ENCODE measurements at regions of chr6 and their contacts with region 1.

Region 1: DNA sequence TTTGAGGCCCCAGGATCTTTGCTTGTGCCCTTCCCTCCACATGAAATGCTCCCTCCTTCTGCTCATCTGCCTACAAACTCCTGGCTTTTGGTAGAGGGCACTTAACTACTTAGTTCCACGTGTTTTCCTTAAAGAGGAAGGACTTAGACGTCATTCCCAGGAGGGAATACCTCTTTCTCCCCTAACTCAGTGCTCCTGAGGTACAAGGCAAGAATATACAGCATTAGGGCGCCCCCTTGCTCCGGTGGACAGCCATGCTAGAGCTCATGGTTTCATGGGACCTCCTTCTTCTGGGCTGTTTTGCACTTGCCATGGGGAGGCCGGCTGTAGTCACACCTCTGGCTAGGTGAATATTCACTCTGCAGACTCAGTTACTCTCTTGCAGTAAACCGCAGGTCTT is 93.8 kb upstream of the LY86 start:
- DNase-seq: peak; percentile 59
- ATAC-seq: peak; percentile 61
- H3K4me3 ChIP-seq: no peak overlapping the region
- H3K4me3 Mint-ChIP-seq: no peak overlapping the region
- H3K27ac ChIP-seq: no peak overlapping the region
- H3K27ac Mint-ChIP-seq: no peak overlapping the region
- H3K4me1 ChIP-seq: no peaks in the 10 kb centered on the region
- H3K4me1 Mint-ChIP-seq: peaks cover 3% of the 10 kb centered on the region
- H3K27me3 ChIP-seq: no peaks in the 10 kb centered on the region
- H3K27me3 Mint-ChIP-seq: peaks cover 3% of the 10 kb centered on the region
- CTCF ChIP-seq: peak; percentile 68

Region 2: DNA sequence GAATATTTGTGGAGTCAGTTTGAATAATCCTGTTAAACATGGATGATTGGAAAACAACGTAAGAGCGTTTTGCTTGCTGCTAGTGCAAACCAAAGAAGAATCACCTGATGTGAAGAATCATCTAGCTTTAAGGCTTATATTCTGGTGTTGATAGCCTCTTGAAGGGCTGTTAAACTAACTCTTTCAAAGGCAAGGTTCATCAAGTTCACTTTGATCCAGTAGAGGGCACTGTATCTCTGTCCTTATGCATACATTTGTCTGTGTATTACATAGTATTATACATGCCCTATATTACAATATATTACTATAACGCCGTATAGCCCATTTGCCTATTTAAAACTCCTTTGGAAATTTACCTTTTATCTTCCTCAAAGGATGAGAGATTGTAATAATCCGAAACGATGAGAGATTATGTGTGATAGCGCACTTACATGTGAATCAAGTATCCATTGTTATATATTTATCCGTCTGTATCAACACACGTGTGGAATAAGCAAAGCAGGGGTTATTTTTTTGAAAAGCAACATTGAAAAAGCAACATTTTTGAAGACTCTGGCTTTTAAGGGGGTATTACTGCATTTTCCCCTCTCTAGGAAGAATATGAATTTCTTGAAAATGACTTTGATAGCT is 437.1 kb before region 1 on chr6:
- CTCF ChIA-PET with region 1: interaction called, 44 read pairs
- POLR2A ChIA-PET with region 1: no interaction called
- intact Hi-C with region 1: loop called (anchors 1 kb)
- DNase-seq: peak; percentile 72
- ATAC-seq: peak; percentile 67
- H3K4me3 ChIP-seq: no peak overlapping the region
- H3K4me3 Mint-ChIP-seq: no peak overlapping the region
- H3K27ac ChIP-seq: no peak overlapping the region
- H3K27ac Mint-ChIP-seq: no peak overlapping the region
- H3K4me1 ChIP-seq: no peaks in the 10 kb centered on the region
- H3K4me1 Mint-ChIP-seq: no peaks in the 10 kb centered on the region
- H3K27me3 ChIP-seq: peaks cover 0 to 18% (median 13%) of the 10 kb centered on the region in 4 experiments
- H3K27me3 Mint-ChIP-seq: peaks cover 65% of the 10 kb centered on the region
- CTCF ChIP-seq: peak; percentile 77

Region 3: GRCh38 chr6:6105472-6106036 is 389.1 kb before region 1 on chr6:
- CTCF ChIA-PET with region 1: interaction called, 6 read pairs
- POLR2A ChIA-PET with region 1: no interaction called
- intact Hi-C with region 1: loop called (anchors 1 kb)
- DNase-seq: peak; percentile 25
- ATAC-seq: no peak
- H3K4me3 ChIP-seq: no peak overlapping the region
- H3K4me3 Mint-ChIP-seq: no peak overlapping the region
- H3K27ac ChIP-seq: no peak overlapping the region
- H3K27ac Mint-ChIP-seq: no peak overlapping the region
- H3K4me1 ChIP-seq: no peaks in the 10 kb centered on the region
- H3K4me1 Mint-ChIP-seq: no peaks in the 10 kb centered on the region
- H3K27me3 ChIP-seq: peaks cover 0 to 7% (median 0%) of the 10 kb centered on the region in 4 experiments
- H3K27me3 Mint-ChIP-seq: peaks cover 44% of the 10 kb centered on the region
- CTCF ChIP-seq: no peak

Region 4: GRCh38 chr6:6221787-6222535 is 272.7 kb before region 1 on chr6:
- CTCF ChIA-PET with region 1: interaction called, 15 read pairs
- POLR2A ChIA-PET with region 1: no interaction called
- intact Hi-C with region 1: loop called (anchors 2 kb)
- DNase-seq: peak; percentile 21
- ATAC-seq: no peak
- H3K4me3 ChIP-seq: no peak overlapping the region
- H3K4me3 Mint-ChIP-seq: no peak overlapping the region
- H3K27ac ChIP-seq: no peak overlapping the region
- H3K27ac Mint-ChIP-seq: no peak overlapping the region
- H3K4me1 ChIP-seq: no peaks in the 10 kb centered on the region
- H3K4me1 Mint-ChIP-seq: no peaks in the 10 kb centered on the region
- H3K27me3 ChIP-seq: peaks cover 0 to 9% (median 3%) of the 10 kb centered on the region in 4 experiments
- H3K27me3 Mint-ChIP-seq: peaks cover 31% of the 10 kb centered on the region
- CTCF ChIP-seq: peak; percentile 13

Region 5: DNA sequence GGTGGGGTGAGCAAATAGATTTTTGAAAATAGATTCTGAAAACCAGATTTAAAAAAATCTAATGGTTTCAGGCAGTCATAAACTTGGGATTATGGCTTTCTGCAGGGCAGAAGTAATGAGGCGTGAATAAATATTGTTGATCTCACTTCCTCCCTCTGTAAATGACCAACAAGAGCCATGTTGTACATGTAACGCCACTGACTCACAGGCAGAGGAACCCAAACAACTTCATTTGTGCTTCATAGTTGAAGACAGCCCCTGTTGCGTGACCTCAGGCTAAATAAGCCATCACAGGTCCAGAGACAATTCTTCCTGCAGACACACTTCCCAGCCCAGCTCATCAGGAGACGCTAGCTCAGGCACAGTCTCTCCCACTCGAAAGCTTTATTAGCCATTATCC is 115.1 kb before region 1 on chr6:
- CTCF ChIA-PET with region 1: interaction called, 31 read pairs
- POLR2A ChIA-PET with region 1: interaction called, 11 read pairs
- intact Hi-C with region 1: loop called (anchors 1 kb)
- DNase-seq: no peak
- ATAC-seq: peak; percentile 41
- H3K4me3 ChIP-seq: no peak overlapping the region
- H3K4me3 Mint-ChIP-seq: no peak overlapping the region
- H3K27ac ChIP-seq: no peak overlapping the region
- H3K27ac Mint-ChIP-seq: peak overlapping the region; percentile 29
- H3K4me1 ChIP-seq: no peaks in the 10 kb centered on the region
- H3K4me1 Mint-ChIP-seq: peaks cover 9% of the 10 kb centered on the region
- H3K27me3 ChIP-seq: no peaks in the 10 kb centered on the region
- H3K27me3 Mint-ChIP-seq: no peaks in the 10 kb centered on the region
- CTCF ChIP-seq: no peak

Region 6: GRCh38 chr6:6390849-6391602 is 103.7 kb before region 1 on chr6:
- CTCF ChIA-PET with region 1: interaction called, 5 read pairs
- POLR2A ChIA-PET with region 1: no interaction called
- intact Hi-C with region 1: loop called (anchors 5 kb)
- DNase-seq: peak; percentile 81
- ATAC-seq: peak; percentile 75
- H3K4me3 ChIP-seq: peak overlapping the region in 3 of 5 experiments; percentile 3 to 36 (median 26)
- H3K4me3 Mint-ChIP-seq: peak overlapping the region; percentile 87
- H3K27ac ChIP-seq: peak overlapping the region; percentile 83 to 92
- H3K27ac Mint-ChIP-seq: peak overlapping the region; percentile 97
- H3K4me1 ChIP-seq: peaks cover 37 to 44% of the 10 kb centered on the region in 2 donors
- H3K4me1 Mint-ChIP-seq: peaks cover 58% of the 10 kb centered on the region
- H3K27me3 ChIP-seq: no peaks in the 10 kb centered on the region
- H3K27me3 Mint-ChIP-seq: peaks cover 3% of the 10 kb centered on the region
- CTCF ChIP-seq: no peak

Region 7: DNA sequence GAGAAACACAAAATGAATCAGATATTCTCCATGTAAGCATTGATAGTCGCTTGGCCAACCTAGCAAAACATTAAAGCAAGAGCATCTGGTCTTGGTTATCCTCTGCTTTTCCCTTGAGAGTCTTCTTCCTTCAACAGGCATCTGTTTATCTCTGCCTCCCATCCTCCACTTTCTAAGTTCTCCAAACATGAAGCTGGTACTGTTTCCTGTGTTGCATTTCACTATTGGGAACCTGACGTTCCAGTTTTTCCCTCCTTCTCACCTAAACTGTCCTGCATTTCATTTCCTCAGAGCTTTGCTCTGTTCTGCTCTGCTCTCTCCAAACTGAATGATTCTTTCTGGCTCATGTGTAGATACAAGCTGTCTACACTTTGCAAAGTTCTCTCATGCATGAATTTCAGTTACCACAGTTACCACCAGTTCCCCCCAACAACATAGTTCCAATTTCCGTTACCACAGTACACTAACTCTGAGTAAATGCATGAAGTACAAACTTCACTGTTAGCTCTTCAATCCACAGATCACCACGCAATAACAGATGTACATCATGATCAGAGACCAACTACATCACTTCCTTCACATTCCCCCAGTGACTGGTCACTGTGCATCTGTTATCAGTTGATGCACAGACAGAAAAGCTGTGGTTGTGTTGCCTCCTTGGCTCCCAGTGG is 87.5 kb before region 1 on chr6:
- CTCF ChIA-PET with region 1: interaction called, 12 read pairs
- POLR2A ChIA-PET with region 1: no interaction called
- intact Hi-C with region 1: no loop called
- DNase-seq: peak; percentile 90
- ATAC-seq: peak; percentile 85
- H3K4me3 ChIP-seq: peak overlapping the region in 3 of 5 experiments; percentile 1 to 45 (median 32)
- H3K4me3 Mint-ChIP-seq: no peak overlapping the region
- H3K27ac ChIP-seq: peak overlapping the region; percentile 65 to 69
- H3K27ac Mint-ChIP-seq: no peak overlapping the region
- H3K4me1 ChIP-seq: peaks cover 24 to 25% of the 10 kb centered on the region in 2 donors
- H3K4me1 Mint-ChIP-seq: peaks cover 4% of the 10 kb centered on the region
- H3K27me3 ChIP-seq: peaks cover 0 to 18% (median 14%) of the 10 kb centered on the region in 4 experiments
- H3K27me3 Mint-ChIP-seq: peaks cover 24% of the 10 kb centered on the region
- CTCF ChIP-seq: no peak

Region 8: GRCh38 chr6:6918216-6918983 is 423.7 kb after region 1 on chr6:
- CTCF ChIA-PET with region 1: no interaction called
- POLR2A ChIA-PET with region 1: no interaction called
- intact Hi-C with region 1: no loop called
- DNase-seq: no peak
- ATAC-seq: no peak
- H3K4me3 ChIP-seq: no peak overlapping the region
- H3K4me3 Mint-ChIP-seq: no peak overlapping the region
- H3K27ac ChIP-seq: no peak overlapping the region
- H3K27ac Mint-ChIP-seq: no peak overlapping the region
- H3K4me1 ChIP-seq: peaks cover 5 to 7% of the 10 kb centered on the region in 2 donors
- H3K4me1 Mint-ChIP-seq: peaks cover 8% of the 10 kb centered on the region
- H3K27me3 ChIP-seq: no peaks in the 10 kb centered on the region
- H3K27me3 Mint-ChIP-seq: peaks cover 12% of the 10 kb centered on the region
- CTCF ChIP-seq: no peak